GM12878 (cell line): ENCODE measurements at regions of chr1 and their contacts with region 1.

Region 1: DNA sequence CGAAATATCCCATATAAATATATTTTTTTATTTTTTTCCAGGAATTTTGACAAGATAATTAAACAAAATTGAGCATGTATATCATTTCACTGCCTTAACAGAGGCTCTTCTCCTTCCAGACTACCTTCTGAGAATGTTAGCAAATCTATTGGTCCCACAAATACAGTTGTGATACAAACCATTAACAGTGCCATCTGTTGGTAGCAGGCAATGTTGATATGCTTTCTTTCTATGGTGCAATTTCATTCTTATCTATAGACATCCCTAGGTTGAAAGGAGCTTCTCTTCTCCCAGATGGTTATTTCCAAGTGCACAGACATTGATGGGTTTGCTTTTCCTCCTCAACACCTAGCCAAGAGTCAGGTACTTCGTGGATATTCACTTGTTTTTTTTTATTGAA is 303.6 kb downstream of the USH2A start:
- DNase-seq: no peak
- ATAC-seq: peak; percentile 86
- H3K4me3 ChIP-seq: no peak overlapping the region
- H3K27ac ChIP-seq: no peak overlapping the region
- H3K4me1 ChIP-seq: no peaks in the 10 kb centered on the region
- H3K27me3 ChIP-seq: no peaks in the 10 kb centered on the region
- CTCF ChIP-seq: peak; percentile 35 to 55 (median 46); a peak in 5 of 6 replicates
- EP300 ChIP-seq: no peak
- POLR2A ChIP-seq: no peak
- RAD21 ChIP-seq: peak; percentile 47; the same call in 1 of the 2 replicates

Region 2: GRCh38 chr1:215824245-215824644 is 295.4 kb before region 1 on chr1:
- CTCF ChIA-PET with region 1: no interaction called
- POLR2A ChIA-PET with region 1: no interaction called
- RAD21 ChIA-PET with region 1: no interaction called
- SMC1A ChIA-PET with region 1: interaction called, 3 read pairs
- in situ Hi-C with region 1: no loop called
- intact Hi-C with region 1: loop called (anchors 10 kb)
- DNase-seq: no peak
- ATAC-seq: no peak
- H3K4me3 ChIP-seq: no peak overlapping the region
- H3K27ac ChIP-seq: no peak overlapping the region
- H3K4me1 ChIP-seq: no peaks in the 10 kb centered on the region
- H3K27me3 ChIP-seq: no peaks in the 10 kb centered on the region
- CTCF ChIP-seq: peak; percentile 3 to 32 (median 17); a peak in 2 of 6 replicates
- EP300 ChIP-seq: no peak
- POLR2A ChIP-seq: no peak
- RAD21 ChIP-seq: peak; percentile 45; the same call in 1 of the 2 replicates

Region 3: GRCh38 chr1:215992620-215993019 is 127.0 kb before region 1 on chr1:
- CTCF ChIA-PET with region 1: interaction called, 10 read pairs
- POLR2A ChIA-PET with region 1: no interaction called
- RAD21 ChIA-PET with region 1: interaction called, 4 read pairs
- SMC1A ChIA-PET with region 1: interaction called, 4 read pairs
- in situ Hi-C with region 1: no loop called
- intact Hi-C with region 1: loop called (anchors 1 kb)
- DNase-seq: no peak
- ATAC-seq: peak; percentile 61
- H3K4me3 ChIP-seq: no peak overlapping the region
- H3K27ac ChIP-seq: no peak overlapping the region
- H3K4me1 ChIP-seq: no peaks in the 10 kb centered on the region
- H3K27me3 ChIP-seq: no peaks in the 10 kb centered on the region
- CTCF ChIP-seq: peak; percentile 22 to 52 (median 49); a peak in 5 of 6 replicates
- EP300 ChIP-seq: no peak
- POLR2A ChIP-seq: no peak
- RAD21 ChIP-seq: peak; percentile 58

Region 4: DNA sequence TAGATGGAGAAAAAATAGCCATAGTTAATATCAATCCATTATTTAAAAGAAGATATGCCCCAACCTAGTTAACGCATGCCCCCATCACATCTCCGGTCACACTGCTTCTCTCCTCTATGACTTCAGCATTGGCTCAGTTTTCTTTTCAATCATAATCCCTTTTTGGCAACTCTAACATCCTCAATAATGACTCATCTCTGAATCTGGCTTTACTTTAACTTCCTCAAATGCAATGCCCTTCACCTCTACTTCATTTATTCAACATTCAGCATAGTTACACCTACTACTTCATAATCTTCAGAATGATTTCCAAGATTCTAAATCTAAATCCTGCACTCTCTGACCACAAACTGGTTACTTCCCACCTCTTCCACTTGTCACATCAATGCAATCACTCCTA is 113.7 kb before region 1 on chr1:
- CTCF ChIA-PET with region 1: interaction called, 11 read pairs
- POLR2A ChIA-PET with region 1: no interaction called
- RAD21 ChIA-PET with region 1: interaction called, 10 read pairs
- SMC1A ChIA-PET with region 1: interaction called, 5 read pairs
- in situ Hi-C with region 1: no loop called
- intact Hi-C with region 1: no loop called
- DNase-seq: peak; percentile 53
- ATAC-seq: peak; percentile 97
- H3K4me3 ChIP-seq: no peak overlapping the region
- H3K27ac ChIP-seq: no peak overlapping the region
- H3K4me1 ChIP-seq: no peaks in the 10 kb centered on the region
- H3K27me3 ChIP-seq: no peaks in the 10 kb centered on the region
- CTCF ChIP-seq: no peak
- EP300 ChIP-seq: peak in 1 of 2 experiments; percentile 89; a peak in 2 of 4 replicates
- POLR2A ChIP-seq: no peak
- RAD21 ChIP-seq: no peak

Region 5: GRCh38 chr1:216144661-216145450 is 25.3 kb after region 1 on chr1:
- CTCF ChIA-PET with region 1: no interaction called
- POLR2A ChIA-PET with region 1: no interaction called
- RAD21 ChIA-PET with region 1: no interaction called
- SMC1A ChIA-PET with region 1: no interaction called
- in situ Hi-C with region 1: no loop called
- intact Hi-C with region 1: no loop called
- DNase-seq: no peak
- ATAC-seq: no peak
- H3K4me3 ChIP-seq: no peak overlapping the region
- H3K27ac ChIP-seq: no peak overlapping the region
- H3K4me1 ChIP-seq: no peaks in the 10 kb centered on the region
- H3K27me3 ChIP-seq: no peaks in the 10 kb centered on the region
- CTCF ChIP-seq: no peak
- EP300 ChIP-seq: no peak
- POLR2A ChIP-seq: no peak
- RAD21 ChIP-seq: no peak

Region 6: GRCh38 chr1:216379441-216379840 is 259.8 kb after region 1 on chr1:
- CTCF ChIA-PET with region 1: no interaction called
- POLR2A ChIA-PET with region 1: no interaction called
- RAD21 ChIA-PET with region 1: no interaction called
- SMC1A ChIA-PET with region 1: no interaction called
- in situ Hi-C with region 1: no loop called
- intact Hi-C with region 1: no loop called
- DNase-seq: no peak
- ATAC-seq: no peak
- H3K4me3 ChIP-seq: no peak overlapping the region
- H3K27ac ChIP-seq: no peak overlapping the region
- H3K4me1 ChIP-seq: no peaks in the 10 kb centered on the region
- H3K27me3 ChIP-seq: no peaks in the 10 kb centered on the region
- CTCF ChIP-seq: no peak
- EP300 ChIP-seq: no peak
- POLR2A ChIP-seq: no peak
- RAD21 ChIP-seq: no peak

Region 7: GRCh38 chr1:216580538-216581057 is 461.0 kb after region 1 on chr1:
- CTCF ChIA-PET with region 1: no interaction called
- POLR2A ChIA-PET with region 1: no interaction called
- RAD21 ChIA-PET with region 1: no interaction called
- SMC1A ChIA-PET with region 1: no interaction called
- in situ Hi-C with region 1: no loop called
- intact Hi-C with region 1: no loop called
- DNase-seq: no peak
- ATAC-seq: no peak
- H3K4me3 ChIP-seq: no peak overlapping the region
- H3K27ac ChIP-seq: no peak overlapping the region
- H3K4me1 ChIP-seq: no peaks in the 10 kb centered on the region
- H3K27me3 ChIP-seq: no peaks in the 10 kb centered on the region
- CTCF ChIP-seq: no peak
- EP300 ChIP-seq: no peak
- POLR2A ChIP-seq: no peak
- RAD21 ChIP-seq: no peak